K562 (cell line): ENCODE measurements at regions of chr5 and their contacts with region 1.

Region 1: DNA sequence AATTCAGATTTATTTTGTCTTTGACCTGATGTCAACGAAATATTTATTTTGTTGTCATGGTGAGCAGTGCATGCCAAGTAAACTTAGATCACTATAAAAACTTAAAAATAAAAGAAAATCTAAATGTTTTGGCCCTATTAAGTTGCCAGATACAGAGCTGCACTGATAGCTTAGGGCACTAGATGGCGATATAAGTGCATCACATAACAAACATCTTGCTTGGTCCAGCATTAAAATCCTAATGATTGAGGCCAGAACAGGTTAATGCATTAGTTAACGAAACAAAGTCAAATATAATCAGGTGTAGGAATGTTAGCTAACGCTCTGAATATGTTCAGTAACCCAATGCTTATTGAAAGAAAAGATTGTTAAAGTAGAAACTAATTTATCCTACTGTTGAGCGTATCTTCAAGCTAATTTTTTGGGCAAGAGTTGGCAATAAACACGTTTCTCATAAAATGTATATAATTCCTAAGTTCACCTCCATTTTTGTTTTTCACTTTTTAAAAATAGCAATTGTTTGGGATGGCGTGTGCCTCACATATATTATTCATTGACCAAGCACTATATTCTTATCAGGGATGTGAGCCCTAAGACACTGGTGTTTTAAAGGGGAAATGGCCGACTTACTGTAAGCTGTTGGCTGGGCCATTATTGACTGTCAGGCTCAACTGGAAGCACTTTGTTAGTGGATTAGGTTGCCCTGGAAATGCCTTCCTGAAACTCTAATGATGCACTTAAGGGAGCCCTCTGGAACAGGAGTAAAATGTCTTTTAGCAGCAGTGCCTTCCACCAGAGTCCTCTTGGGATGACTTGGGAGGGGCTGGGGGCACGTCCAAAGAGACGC is 33.3 kb downstream of the KCTD16 start:
- DNase-seq: peak; percentile 26 to 67 (median 32)
- ATAC-seq: peak; percentile 88
- H3K4me3 ChIP-seq: no peak overlapping the region
- H3K27ac ChIP-seq: no peak overlapping the region
- H3K4me1 ChIP-seq: peaks cover 0 to 4% of the 10 kb centered on the region in 2 experiments; a peak in 2 of 5 replicates
- H3K27me3 ChIP-seq: peaks cover 3 to 6% of the 10 kb centered on the region in 2 experiments; a peak in 2 of 5 replicates
- CTCF ChIP-seq: peak; percentile 59 to 82 (median 77)
- EP300 ChIP-seq: no peak
- POLR2A ChIP-seq: no peak
- RAD21 ChIP-seq: peak; percentile 80 to 87

Region 2: DNA sequence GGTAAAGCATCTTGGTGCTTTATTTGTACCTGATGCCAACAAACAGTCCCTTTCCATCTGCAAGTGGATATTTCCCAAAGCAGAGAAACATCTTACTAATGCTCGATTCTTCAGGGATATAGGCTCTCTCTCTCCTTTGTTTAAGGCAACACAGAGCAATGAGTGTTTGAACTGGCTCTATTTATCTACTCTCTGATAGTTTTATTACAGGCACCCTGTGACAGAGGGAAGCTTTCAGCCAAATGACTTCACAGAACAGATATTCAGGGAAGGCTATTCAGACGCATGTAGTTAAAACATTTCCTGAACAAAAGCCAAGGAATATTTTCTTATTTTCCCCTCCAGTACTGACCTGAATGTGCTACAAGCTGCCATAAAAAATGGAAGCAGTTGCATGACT is 175.3 kb before region 1 on chr5:
- CTCF ChIA-PET with region 1: no interaction called
- POLR2A ChIA-PET with region 1: no interaction called
- in situ Hi-C with region 1: no loop called
- intact Hi-C with region 1: no loop called
- DNase-seq: no peak
- ATAC-seq: no peak
- H3K4me3 ChIP-seq: no peak overlapping the region
- H3K27ac ChIP-seq: no peak overlapping the region
- H3K4me1 ChIP-seq: no peaks in the 10 kb centered on the region
- H3K27me3 ChIP-seq: no peaks in the 10 kb centered on the region
- CTCF ChIP-seq: no peak
- EP300 ChIP-seq: no peak
- POLR2A ChIP-seq: no peak
- RAD21 ChIP-seq: no peak

Region 3: DNA sequence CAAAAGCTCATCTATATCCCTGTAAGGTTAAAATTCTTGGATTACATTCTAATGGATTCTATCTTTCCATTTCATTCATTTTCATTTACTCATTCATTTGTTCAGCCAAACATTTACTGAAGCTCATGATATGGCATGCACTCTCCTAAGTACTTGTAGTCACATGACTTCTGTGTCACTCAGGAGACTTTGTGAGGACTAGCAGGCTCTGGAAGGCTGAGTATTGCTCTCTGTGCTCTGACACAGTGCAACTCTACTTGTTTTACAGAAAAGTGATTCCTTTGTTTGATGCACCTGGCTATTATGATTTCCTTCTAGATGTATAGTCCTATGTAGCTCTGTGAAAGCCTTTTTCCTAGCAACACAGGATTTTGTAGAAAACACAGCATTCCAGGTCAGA is 86.6 kb before region 1 on chr5:
- CTCF ChIA-PET with region 1: no interaction called
- POLR2A ChIA-PET with region 1: no interaction called
- in situ Hi-C with region 1: no loop called
- intact Hi-C with region 1: no loop called
- DNase-seq: no peak
- ATAC-seq: no peak
- H3K4me3 ChIP-seq: no peak overlapping the region
- H3K27ac ChIP-seq: no peak overlapping the region
- H3K4me1 ChIP-seq: no peaks in the 10 kb centered on the region
- H3K27me3 ChIP-seq: no peaks in the 10 kb centered on the region
- CTCF ChIP-seq: no peak
- EP300 ChIP-seq: no peak
- POLR2A ChIP-seq: no peak
- RAD21 ChIP-seq: no peak

Region 4: DNA sequence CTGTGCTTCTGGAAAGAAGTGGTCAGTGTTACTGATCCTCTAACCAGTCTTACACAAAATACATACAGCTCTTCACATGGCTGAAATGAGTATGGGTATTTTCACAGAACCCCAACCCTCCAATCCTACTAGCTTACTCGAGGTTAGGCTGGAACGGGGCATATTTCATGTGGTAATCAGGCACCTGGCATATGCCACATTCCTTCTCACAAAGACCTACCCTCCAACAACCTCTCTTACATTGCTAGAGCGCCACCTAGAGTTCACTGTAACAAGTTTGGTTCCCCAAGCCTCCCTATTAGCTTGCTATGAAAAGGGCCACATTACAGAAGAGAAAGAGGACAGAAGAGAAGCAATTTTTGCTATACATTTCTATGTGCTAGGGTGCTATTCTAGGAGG is 1033.9 kb after region 1 on chr5:
- CTCF ChIA-PET with region 1: no interaction called
- POLR2A ChIA-PET with region 1: interaction called, 4 read pairs
- in situ Hi-C with region 1: no loop called
- intact Hi-C with region 1: loop called (anchors 10 kb)
- DNase-seq: peak in 2 of 4 experiments; percentile 10 to 13
- ATAC-seq: no peak
- H3K4me3 ChIP-seq: no peak overlapping the region
- H3K27ac ChIP-seq: no peak overlapping the region
- H3K4me1 ChIP-seq: no peaks in the 10 kb centered on the region
- H3K27me3 ChIP-seq: no peaks in the 10 kb centered on the region
- CTCF ChIP-seq: 0 out of 6 replicates have a peak, but pooled peaks of 1 of the 3 experiments have one; percentile 12
- EP300 ChIP-seq: no peak
- POLR2A ChIP-seq: no peak
- RAD21 ChIP-seq: peak in 1 of 2 experiments; percentile 41; a peak in 2 of 4 replicates